ENCODE measurements at regions of chr4 and their contacts with region 1.

Region 1: GRCh38 chr4:175536852-175537453 is 275.1 kb downstream of the GPM6A start:
- DNase-seq: no peak
- ATAC-seq: no peak
- H3K4me3 ChIP-seq: no peak overlapping the region
- H3K27ac ChIP-seq: no peak overlapping the region
- H3K4me1 ChIP-seq: no peaks in the 10 kb centered on the region
- H3K27me3 ChIP-seq: no peaks in the 10 kb centered on the region

Region 2: GRCh38 chr4:174764105-174764729 is 772.7 kb before region 1 on chr4:
- intact Hi-C with region 1: loop called (anchors 5 kb)
- DNase-seq: no peak
- ATAC-seq: no peak
- H3K4me3 ChIP-seq: no peak overlapping the region
- H3K27ac ChIP-seq: no peak overlapping the region
- H3K4me1 ChIP-seq: no peaks in the 10 kb centered on the region
- H3K27me3 ChIP-seq: no peaks in the 10 kb centered on the region

Region 3: DNA sequence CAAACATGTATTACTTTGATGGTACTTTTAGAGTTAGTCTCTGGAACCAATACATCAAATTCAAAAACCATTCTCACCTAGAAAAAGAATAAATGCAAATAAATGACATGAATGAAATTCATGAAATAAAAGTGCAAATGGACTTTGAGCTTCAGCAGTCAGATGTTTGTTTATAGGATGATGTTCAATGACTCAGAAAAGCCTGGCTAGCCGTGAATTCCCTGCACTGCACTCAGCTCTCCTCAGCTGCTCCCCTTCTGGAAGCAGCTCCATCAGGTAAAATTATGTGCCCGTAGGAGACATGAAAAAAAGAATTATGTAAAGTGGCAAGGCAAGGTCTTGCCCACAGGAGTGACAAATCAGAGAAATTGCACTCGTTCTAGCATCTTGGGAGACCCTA is 115.4 kb before region 1 on chr4:
- intact Hi-C with region 1: loop called in 1 of 2 experiments (anchors 10 kb)
- DNase-seq: no peak
- ATAC-seq: no peak
- H3K4me3 ChIP-seq: no peak overlapping the region
- H3K27ac ChIP-seq: no peak overlapping the region
- H3K4me1 ChIP-seq: no peaks in the 10 kb centered on the region
- H3K27me3 ChIP-seq: no peaks in the 10 kb centered on the region

Region 4: GRCh38 chr4:176377780-176378179 is 840.8 kb after region 1 on chr4:
- intact Hi-C with region 1: no loop called
- DNase-seq: no peak
- ATAC-seq: no peak
- H3K4me3 ChIP-seq: no peak overlapping the region
- H3K27ac ChIP-seq: no peak overlapping the region
- H3K4me1 ChIP-seq: no peaks in the 10 kb centered on the region
- H3K27me3 ChIP-seq: no peaks in the 10 kb centered on the region

Measured in aorta (tissue), 5 donors.